ENCODE measurements at regions of chr17 and their contacts with region 1.

Region 1: DNA sequence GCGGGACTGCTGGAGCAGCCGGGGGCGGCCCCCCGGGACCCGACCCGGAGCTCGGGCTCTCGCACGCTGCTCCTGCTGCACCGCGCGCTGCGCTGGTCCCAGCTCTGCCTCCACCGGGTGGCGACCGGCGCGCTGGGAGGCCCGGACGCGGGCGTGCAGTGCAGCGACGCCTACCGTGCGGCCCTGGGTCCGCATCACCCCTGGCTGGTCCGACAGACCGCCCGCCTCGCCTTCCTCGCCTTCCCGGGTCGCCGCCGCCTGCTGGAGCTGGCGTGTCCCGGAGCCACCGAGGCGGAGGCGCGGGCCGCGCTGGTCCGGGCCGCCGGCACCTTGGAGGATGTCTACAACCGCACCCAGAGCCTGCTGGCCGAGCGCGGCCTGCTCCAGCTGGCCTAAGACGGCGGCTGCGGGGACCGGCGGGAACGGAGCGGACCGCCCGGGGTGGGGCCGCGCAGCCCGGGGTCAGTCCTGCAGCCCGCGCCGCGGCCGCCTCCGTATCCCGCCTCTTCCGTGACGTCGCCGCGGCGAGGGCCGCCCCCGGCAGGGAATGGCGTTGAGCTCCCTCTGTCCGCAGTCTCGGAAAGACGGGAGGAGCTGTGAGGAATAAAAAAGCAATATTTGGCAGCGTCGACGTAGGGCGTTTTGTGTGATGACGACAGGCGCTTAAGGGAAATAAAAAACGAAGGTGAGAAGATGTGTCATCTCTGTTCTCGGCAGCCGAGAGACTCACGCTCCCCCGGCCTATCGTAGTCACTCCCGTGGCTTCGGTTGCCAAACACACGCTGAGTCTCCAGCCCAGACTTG is 1.3 kb downstream of the GLTPD2 start:
- DNase-seq: peak; percentile 84 to 92
- H3K4me3 ChIP-seq: peak overlapping the region; percentile 84
- H3K27ac ChIP-seq: peak overlapping the region; percentile 69
- H3K4me1 ChIP-seq: peaks cover 20% of the 10 kb centered on the region
- H3K27me3 ChIP-seq: no peaks in the 10 kb centered on the region
- CTCF ChIP-seq: peak; percentile 70

Region 2: DNA sequence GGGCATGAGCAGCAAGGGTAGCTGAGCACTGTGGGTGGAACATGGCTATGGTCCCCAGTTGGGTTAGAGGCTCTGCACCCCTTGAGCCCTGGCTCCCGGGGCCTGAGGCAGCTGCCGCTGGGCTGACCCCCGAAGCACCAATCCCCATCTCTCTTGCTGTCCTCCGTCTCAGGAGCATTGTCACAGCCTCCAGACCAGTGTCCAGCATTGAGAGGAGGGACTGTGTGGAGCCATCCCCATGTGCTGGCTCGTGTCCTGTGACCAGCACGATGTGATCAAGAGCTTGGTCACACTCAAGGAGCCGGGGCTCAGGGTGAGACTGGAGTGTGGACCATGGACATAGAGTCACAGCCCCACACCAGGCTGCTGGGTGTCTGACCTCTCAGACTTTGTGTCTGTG is 202.9 kb before region 1 on chr17:
- CTCF ChIA-PET with region 1: interaction called, 10 read pairs
- POLR2A ChIA-PET with region 1: no interaction called
- intact Hi-C with region 1: no loop called
- DNase-seq: no peak
- H3K4me3 ChIP-seq: no peak overlapping the region
- H3K27ac ChIP-seq: no peak overlapping the region
- H3K4me1 ChIP-seq: no peaks in the 10 kb centered on the region
- H3K27me3 ChIP-seq: peaks cover 84% of the 10 kb centered on the region
- CTCF ChIP-seq: no peak

Region 3: GRCh38 chr17:4733073-4733531 is 57.0 kb before region 1 on chr17:
- CTCF ChIA-PET with region 1: interaction called, 13 read pairs
- POLR2A ChIA-PET with region 1: interaction called, 18 read pairs
- intact Hi-C with region 1: loop called (anchors 2 kb)
- DNase-seq: no peak
- H3K4me3 ChIP-seq: no peak overlapping the region
- H3K27ac ChIP-seq: no peak overlapping the region
- H3K4me1 ChIP-seq: peaks cover 10% of the 10 kb centered on the region; the same call in 1 of the 2 replicates
- H3K27me3 ChIP-seq: no peaks in the 10 kb centered on the region
- CTCF ChIP-seq: no peak

Region 4: GRCh38 chr17:4777969-4778761 is 11.9 kb before region 1 on chr17:
- CTCF ChIA-PET with region 1: interaction called, 15 read pairs
- POLR2A ChIA-PET with region 1: no interaction called
- intact Hi-C with region 1: no loop called
- DNase-seq: peak in 1 of 2 experiments; percentile 48
- H3K4me3 ChIP-seq: no peak overlapping the region
- H3K27ac ChIP-seq: no peak overlapping the region
- H3K4me1 ChIP-seq: peaks cover 9% of the 10 kb centered on the region; the same call in 1 of the 2 replicates
- H3K27me3 ChIP-seq: no peaks in the 10 kb centered on the region
- CTCF ChIP-seq: no peak

Region 5: GRCh38 chr17:4872786-4873185 is 82.7 kb after region 1 on chr17:
- CTCF ChIA-PET with region 1: interaction called, 5 read pairs
- POLR2A ChIA-PET with region 1: interaction called, 11 read pairs
- intact Hi-C with region 1: no loop called
- DNase-seq: no peak
- H3K4me3 ChIP-seq: no peak overlapping the region
- H3K27ac ChIP-seq: no peak overlapping the region
- H3K4me1 ChIP-seq: no peaks in the 10 kb centered on the region
- H3K27me3 ChIP-seq: no peaks in the 10 kb centered on the region
- CTCF ChIP-seq: no peak

Region 6: GRCh38 chr17:4891411-4892342 is 101.6 kb after region 1 on chr17:
- CTCF ChIA-PET with region 1: interaction called, 8 read pairs
- POLR2A ChIA-PET with region 1: no interaction called
- intact Hi-C with region 1: loop called (anchors 1 kb)
- DNase-seq: no peak
- H3K4me3 ChIP-seq: no peak overlapping the region
- H3K27ac ChIP-seq: no peak overlapping the region
- H3K4me1 ChIP-seq: no peaks in the 10 kb centered on the region
- H3K27me3 ChIP-seq: no peaks in the 10 kb centered on the region
- CTCF ChIP-seq: no peak

Region 7: DNA sequence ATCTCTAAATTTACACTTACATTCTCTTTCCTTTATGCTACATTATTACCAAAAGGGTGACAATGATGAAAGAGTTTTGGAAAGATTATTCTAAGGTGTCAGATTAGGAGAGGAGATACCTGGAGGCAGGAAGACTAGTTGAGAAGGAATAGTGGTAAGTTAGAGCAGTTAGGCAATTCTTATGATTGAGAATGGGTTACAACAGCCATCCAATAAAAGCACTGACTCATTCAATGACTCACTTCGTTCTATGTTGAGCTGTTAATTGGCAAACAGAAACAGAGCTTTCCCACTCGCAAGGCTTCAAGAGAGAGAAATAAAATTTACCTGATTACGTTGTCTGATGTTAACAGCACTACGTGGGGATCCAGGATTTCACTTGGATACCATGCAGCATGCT is 623.6 kb after region 1 on chr17:
- CTCF ChIA-PET with region 1: no interaction called
- POLR2A ChIA-PET with region 1: interaction called, 12 read pairs
- intact Hi-C with region 1: no loop called
- DNase-seq: peak in 1 of 2 experiments; percentile 94
- H3K4me3 ChIP-seq: 0 out of 2 replicates have a peak overlapping the region, but pooled peaks have one; percentile 10
- H3K27ac ChIP-seq: peak overlapping the region; percentile 94
- H3K4me1 ChIP-seq: peaks cover 45% of the 10 kb centered on the region
- H3K27me3 ChIP-seq: no peaks in the 10 kb centered on the region
- CTCF ChIP-seq: no peak

Measured in PC-9 (cell line).